ENCODE measurements at regions of chr17 and their contacts with region 1.

Region 1: DNA sequence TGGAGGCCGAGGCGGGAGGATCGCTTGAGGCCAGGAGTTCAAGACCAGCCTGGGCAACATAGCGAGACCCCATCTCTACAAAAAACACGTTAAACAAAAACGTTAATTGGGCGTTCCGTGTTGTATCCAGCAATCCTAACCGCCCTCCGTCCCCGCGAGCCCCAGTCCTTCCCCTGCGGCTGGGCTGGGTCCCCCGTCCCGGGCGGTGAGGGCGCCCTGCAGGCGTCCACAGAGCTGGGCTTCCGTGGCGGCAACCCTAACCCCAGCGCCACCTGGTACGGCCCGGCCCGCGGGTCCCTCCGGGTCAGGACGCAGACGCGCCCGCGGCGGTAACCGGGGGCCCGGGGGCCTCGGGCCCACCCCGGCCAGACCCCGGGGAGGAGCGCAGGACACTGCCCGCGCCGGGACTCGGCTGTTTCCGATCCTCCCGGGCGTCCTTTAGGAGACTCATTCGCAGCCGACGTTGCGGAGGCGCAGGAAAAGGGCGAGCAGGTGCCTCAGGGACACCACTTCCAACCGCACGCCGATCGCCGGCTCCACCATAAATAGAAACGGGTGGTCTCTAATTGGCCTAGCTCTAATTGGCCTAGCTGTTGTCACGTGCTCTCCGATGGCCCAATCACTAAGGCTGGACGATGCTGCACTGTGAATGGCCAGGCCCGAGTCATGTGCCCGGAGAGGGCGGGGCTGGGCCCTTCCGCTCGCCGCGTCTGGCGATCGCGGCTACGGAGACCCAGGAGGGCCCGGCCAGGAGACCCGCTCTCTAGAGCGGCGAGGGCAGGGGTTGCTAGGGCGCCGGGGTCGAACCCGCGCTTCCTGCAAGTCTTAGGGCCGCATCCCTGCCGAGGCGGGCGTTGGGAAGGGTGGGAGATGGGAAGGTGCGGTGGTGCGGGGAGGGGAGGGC is 19.0 kb upstream of the CSNK1D start:
- DNase-seq: peak; percentile 92 to 97 (median 95)
- ATAC-seq: peak; percentile 89
- H3K4me3 ChIP-seq: peak overlapping the region; percentile 79 to 85
- H3K27ac ChIP-seq: peak overlapping the region; percentile 92
- H3K4me1 ChIP-seq: peaks cover 4 to 68% of the 10 kb centered on the region in 2 donors
- H3K27me3 ChIP-seq: no peaks in the 10 kb centered on the region
- CTCF ChIP-seq: no peak

Region 2: DNA sequence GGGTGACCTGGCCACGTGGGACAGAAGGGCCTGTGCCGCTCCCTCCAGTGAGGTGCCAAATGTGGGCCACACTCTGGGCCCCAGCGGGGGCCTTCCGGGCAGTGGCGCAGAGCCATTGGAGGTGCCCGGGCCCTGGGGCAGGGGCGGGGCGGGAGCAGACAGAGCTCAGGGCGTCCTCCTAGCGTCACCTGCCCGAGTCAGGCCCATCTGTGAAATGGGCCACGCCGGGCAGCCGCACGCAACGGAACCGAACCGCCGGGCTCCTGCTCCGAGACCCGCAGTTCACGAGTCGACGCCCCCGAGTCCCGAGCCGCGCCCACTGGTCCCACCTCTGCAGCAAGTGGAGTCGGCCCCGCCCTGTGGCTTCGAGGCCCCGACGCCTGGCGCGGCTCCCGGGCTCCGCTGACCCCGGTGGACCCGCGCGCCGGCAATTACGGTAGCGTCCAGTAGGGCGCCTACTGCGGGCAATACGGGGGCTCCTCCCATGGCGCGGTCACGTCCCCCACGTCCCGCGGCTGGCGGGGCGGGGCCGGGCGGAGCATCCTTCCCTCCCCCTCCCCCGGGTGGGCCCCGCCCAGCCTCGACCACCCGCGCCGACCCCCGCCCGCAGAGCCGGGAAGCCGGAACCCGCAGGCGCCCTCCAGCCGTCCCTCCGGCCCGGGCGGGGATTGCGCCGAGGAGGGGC is 61.7 kb before region 1 on chr17:
- intact Hi-C with region 1: loop called in 1 of 2 experiments (anchors 10 kb)
- DNase-seq: peak; percentile 82 to 97 (median 92)
- ATAC-seq: peak; percentile 70
- H3K4me3 ChIP-seq: peak overlapping the region; percentile 71 to 83
- H3K27ac ChIP-seq: peak overlapping the region; percentile 95 to 100
- H3K4me1 ChIP-seq: peaks cover 22 to 92% of the 10 kb centered on the region in 2 donors
- H3K27me3 ChIP-seq: peaks cover 0 to 6% of the 10 kb centered on the region in 2 donors
- CTCF ChIP-seq: peak; percentile 56 to 86

Region 3: DNA sequence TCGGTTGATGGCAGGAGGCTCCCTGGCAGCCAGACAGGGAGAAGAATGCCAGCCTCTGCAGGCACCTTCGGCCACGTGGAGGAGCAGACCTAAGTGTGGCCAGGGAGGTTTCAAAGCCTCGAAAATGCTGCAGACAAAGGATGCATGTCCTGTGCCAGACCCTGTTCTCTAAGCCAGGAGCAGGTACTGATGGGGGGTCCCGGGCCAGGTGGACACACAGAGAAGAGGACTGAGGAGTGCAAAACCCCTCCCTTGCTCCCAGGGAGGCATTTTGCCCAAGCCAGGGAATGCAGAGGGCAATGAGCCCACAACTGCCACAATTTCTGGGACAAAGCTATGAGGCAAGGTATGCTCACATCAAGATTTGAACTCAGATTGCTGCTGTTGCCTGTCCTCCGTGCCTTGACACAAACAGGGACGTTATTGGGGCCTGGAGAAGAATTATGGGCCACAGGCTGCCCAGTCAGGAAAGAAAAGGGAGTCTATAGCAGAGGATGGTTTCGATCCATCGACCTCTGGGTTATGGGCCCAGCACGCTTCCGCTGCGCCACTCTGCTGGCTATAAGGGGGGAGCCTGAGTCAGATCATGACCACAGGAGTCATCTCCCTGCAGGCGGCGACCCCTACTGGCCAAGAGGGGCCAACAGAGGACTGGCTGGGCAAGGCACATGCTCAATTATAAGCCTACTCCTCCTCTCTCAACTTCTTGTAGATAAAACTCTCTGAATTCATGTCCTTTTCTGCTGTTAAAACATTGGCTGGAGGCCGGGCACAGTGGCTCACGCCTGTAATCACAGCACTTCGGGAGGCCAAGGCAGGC is 201.9 kb after region 1 on chr17:
- intact Hi-C with region 1: no loop called
- DNase-seq: peak; percentile 78 to 92 (median 90)
- ATAC-seq: peak; percentile 77
- H3K4me3 ChIP-seq: no peak overlapping the region
- H3K27ac ChIP-seq: peak overlapping the region in 1 of 2 donors; percentile 70
- H3K4me1 ChIP-seq: peaks cover 5 to 36% of the 10 kb centered on the region in 2 donors
- H3K27me3 ChIP-seq: no peaks in the 10 kb centered on the region
- CTCF ChIP-seq: peak; percentile 79 to 85

Region 4: GRCh38 chr17:82636626-82637598 is 344.4 kb after region 1 on chr17:
- intact Hi-C with region 1: no loop called
- DNase-seq: peak in 2 of 4 donors; percentile 1 to 62
- ATAC-seq: no peak
- H3K4me3 ChIP-seq: no peak overlapping the region
- H3K27ac ChIP-seq: no peak overlapping the region
- H3K4me1 ChIP-seq: no peaks in the 10 kb centered on the region
- H3K27me3 ChIP-seq: no peaks in the 10 kb centered on the region
- CTCF ChIP-seq: no peak